MCF 10A (cell line): ENCODE measurements at regions of chr19 and their contacts with region 1.

Region 1: GRCh38 chr19:41570639-41571112 is 5.3 kb upstream of the CEACAM21 start:
- DNase-seq: peak; percentile 82
- H3K4me3 Mint-ChIP-seq: no peak overlapping the region
- H3K27ac Mint-ChIP-seq: no peak overlapping the region
- H3K4me1 Mint-ChIP-seq: no peaks in the 10 kb centered on the region
- H3K27me3 Mint-ChIP-seq: peaks cover 97% of the 10 kb centered on the region
- CTCF ChIP-seq: peak; percentile 94

Region 2: DNA sequence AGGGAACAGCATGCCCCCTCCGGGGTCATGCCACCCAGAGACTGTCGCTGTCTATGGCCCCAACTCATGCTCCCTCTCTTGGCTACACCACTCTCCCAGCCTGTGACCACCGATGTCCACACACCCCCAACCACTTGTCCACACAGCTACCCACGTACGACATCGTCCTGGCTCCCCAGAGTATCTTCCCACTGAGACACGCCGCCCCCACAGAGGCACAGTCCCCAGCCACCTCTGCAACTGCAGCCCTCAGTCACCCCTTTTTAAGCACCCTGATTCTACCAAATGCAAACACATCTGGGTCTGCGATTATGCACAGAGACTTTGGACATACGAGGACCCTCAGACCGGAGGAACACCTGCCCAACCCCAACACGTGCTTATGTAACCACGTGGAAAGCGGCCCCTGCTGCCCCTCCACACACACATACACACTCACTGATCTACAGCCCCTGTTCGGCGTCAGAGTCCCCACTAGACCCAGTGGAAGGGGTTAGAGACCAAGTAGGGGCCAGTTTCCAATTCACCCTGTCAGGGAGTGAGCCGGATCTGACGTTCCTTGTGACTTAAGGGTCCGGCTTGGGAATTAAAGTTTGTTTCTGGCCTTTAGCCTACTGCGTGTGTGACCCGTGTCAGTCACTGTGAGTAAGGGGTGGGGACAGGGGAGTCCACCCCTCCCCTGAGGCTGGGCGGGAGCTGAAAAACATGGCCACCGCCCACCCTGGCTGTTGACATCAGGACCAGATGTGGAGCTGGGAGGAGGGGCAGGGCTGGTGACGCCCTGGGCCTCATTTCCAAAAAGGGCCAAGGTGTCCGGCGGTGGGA is 363.5 kb before region 1 on chr19:
- CTCF ChIA-PET with region 1: interaction called, 3 read pairs
- POLR2A ChIA-PET with region 1: no interaction called
- intact Hi-C with region 1: loop called (anchors 1 kb)
- DNase-seq: no peak
- H3K4me3 Mint-ChIP-seq: no peak overlapping the region
- H3K27ac Mint-ChIP-seq: peak overlapping the region; percentile 61
- H3K4me1 Mint-ChIP-seq: peaks cover 17% of the 10 kb centered on the region
- H3K27me3 Mint-ChIP-seq: no peaks in the 10 kb centered on the region
- CTCF ChIP-seq: no peak

Region 3: DNA sequence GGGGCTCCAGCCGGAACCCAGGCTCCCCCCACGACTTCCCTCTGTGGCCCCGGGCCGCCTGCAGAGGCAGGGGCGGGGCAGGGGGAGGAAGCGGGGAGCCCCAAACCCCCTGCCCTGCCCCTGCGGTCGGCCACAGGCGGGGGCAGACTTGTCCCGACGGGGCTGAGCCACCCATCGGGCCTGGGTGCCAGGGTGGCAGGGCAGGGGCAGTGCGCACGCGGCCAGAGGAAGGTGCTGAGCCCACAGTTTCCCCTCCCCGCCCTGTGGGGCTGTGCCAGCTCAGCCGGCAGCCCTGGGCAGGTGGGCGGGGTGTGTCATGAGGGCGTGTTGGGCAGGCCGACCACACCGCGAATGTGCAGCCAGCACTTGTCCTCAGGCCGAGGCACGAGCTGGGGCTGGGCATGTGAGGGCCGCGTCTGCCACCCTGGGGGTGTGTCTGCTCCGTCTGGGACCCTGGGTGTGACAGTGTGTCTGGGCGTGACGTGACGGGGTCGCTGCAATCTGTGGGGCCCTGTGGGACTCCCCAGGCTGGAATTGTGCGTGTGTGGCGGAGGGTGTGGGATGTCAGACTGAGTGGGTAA is 243.0 kb before region 1 on chr19:
- CTCF ChIA-PET with region 1: interaction called, 3 read pairs
- POLR2A ChIA-PET with region 1: no interaction called
- intact Hi-C with region 1: loop called (anchors 10 kb)
- DNase-seq: peak; percentile 92
- H3K4me3 Mint-ChIP-seq: peak overlapping the region; percentile 71
- H3K27ac Mint-ChIP-seq: peak overlapping the region; percentile 41
- H3K4me1 Mint-ChIP-seq: peaks cover 54% of the 10 kb centered on the region
- H3K27me3 Mint-ChIP-seq: no peaks in the 10 kb centered on the region
- CTCF ChIP-seq: no peak

Region 4: DNA sequence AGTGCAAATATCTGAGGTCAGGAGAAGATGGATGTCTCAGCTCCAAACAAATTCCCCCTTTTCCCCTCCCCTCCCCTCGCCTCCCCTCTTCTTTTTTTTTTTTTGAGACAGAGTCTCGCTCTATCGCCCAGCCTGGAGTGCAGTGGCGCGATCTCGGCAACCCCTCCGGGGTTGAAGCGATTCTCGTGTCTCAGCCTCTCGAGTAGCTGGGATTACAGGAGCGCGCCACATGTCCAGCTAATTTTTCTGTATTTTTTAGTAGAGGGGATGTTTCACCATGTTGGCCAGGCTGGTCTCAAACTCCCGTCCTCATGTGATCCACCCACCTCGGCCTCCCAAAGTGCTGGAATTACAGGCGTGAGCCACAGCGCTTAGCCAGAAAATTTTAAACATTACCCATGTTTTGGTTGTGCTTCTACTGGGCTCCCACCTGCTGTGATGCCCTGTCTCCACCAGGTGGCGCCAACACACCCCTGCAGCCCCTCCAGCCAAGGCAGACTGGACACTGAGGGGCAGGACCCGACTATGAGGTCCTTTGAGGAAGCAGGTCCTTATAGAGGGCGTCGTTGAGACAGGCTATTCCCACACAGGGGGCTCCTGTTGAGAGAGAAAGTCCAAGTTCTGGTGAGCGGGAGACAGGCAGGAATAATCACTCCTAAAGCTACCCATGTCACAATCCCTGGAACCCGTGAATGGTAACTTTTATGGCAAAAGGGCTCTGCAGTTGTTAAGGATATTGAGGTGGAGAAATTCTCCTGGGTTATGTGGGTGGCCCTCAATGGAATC is 121.4 kb before region 1 on chr19:
- CTCF ChIA-PET with region 1: interaction called, 315 read pairs
- POLR2A ChIA-PET with region 1: interaction called, 7 read pairs
- intact Hi-C with region 1: loop called (anchors 1 kb)
- DNase-seq: peak; percentile 68
- H3K4me3 Mint-ChIP-seq: peak overlapping the region; percentile 35
- H3K27ac Mint-ChIP-seq: no peak overlapping the region
- H3K4me1 Mint-ChIP-seq: no peaks in the 10 kb centered on the region
- H3K27me3 Mint-ChIP-seq: peaks cover 44% of the 10 kb centered on the region
- CTCF ChIP-seq: peak; percentile 94

Region 5: GRCh38 chr19:41548954-41549688 is 21.6 kb before region 1 on chr19:
- CTCF ChIA-PET with region 1: interaction called, 13 read pairs
- POLR2A ChIA-PET with region 1: no interaction called
- intact Hi-C with region 1: no loop called
- DNase-seq: no peak
- H3K4me3 Mint-ChIP-seq: no peak overlapping the region
- H3K27ac Mint-ChIP-seq: no peak overlapping the region
- H3K4me1 Mint-ChIP-seq: no peaks in the 10 kb centered on the region
- H3K27me3 Mint-ChIP-seq: peaks cover 100% of the 10 kb centered on the region
- CTCF ChIP-seq: no peak

Region 6: GRCh38 chr19:41597600-41598041 is 26.9 kb after region 1 on chr19:
- CTCF ChIA-PET with region 1: interaction called, 23 read pairs
- POLR2A ChIA-PET with region 1: no interaction called
- intact Hi-C with region 1: no loop called
- DNase-seq: peak; percentile 68
- H3K4me3 Mint-ChIP-seq: no peak overlapping the region
- H3K27ac Mint-ChIP-seq: no peak overlapping the region
- H3K4me1 Mint-ChIP-seq: peaks cover 6% of the 10 kb centered on the region
- H3K27me3 Mint-ChIP-seq: peaks cover 85% of the 10 kb centered on the region
- CTCF ChIP-seq: peak; percentile 86

Region 7: GRCh38 chr19:41606215-41606837 is 35.6 kb after region 1 on chr19:
- CTCF ChIA-PET with region 1: interaction called, 16 read pairs
- POLR2A ChIA-PET with region 1: no interaction called
- intact Hi-C with region 1: no loop called
- DNase-seq: no peak
- H3K4me3 Mint-ChIP-seq: no peak overlapping the region
- H3K27ac Mint-ChIP-seq: no peak overlapping the region
- H3K4me1 Mint-ChIP-seq: no peaks in the 10 kb centered on the region
- H3K27me3 Mint-ChIP-seq: peaks cover 89% of the 10 kb centered on the region
- CTCF ChIP-seq: no peak